Panc1 (cell line): ENCODE measurements at regions of chr5 and their contacts with region 1.

Region 1: GRCh38 chr5:136364307-136364706 is 1.0 kb downstream of the TRPC7 start:
- DNase-seq: no peak
- ATAC-seq: no peak; the same call in 1 of the 2 replicates
- H3K4me3 ChIP-seq: no peak overlapping the region
- H3K27ac ChIP-seq: no peak overlapping the region
- H3K4me1 ChIP-seq: no peaks in the 10 kb centered on the region
- H3K27me3 ChIP-seq: peaks cover 5% of the 10 kb centered on the region; the same call in 1 of the 2 replicates
- CTCF ChIP-seq: peak; percentile 56; the same call in 1 of the 2 replicates

Region 2: GRCh38 chr5:136296846-136297245 is 67.5 kb before region 1 on chr5:
- CTCF ChIA-PET with region 1: no interaction called
- POLR2A ChIA-PET with region 1: no interaction called
- in situ Hi-C with region 1: no loop called
- intact Hi-C with region 1: no loop called
- DNase-seq: no peak
- ATAC-seq: no peak
- H3K4me3 ChIP-seq: no peak overlapping the region
- H3K27ac ChIP-seq: no peak overlapping the region
- H3K4me1 ChIP-seq: no peaks in the 10 kb centered on the region
- H3K27me3 ChIP-seq: no peaks in the 10 kb centered on the region
- CTCF ChIP-seq: no peak

Region 3: GRCh38 chr5:136350343-136350742 is 14.0 kb before region 1 on chr5:
- CTCF ChIA-PET with region 1: no interaction called
- POLR2A ChIA-PET with region 1: no interaction called
- in situ Hi-C with region 1: no loop called
- intact Hi-C with region 1: loop called (anchors 1 kb)
- DNase-seq: no peak
- ATAC-seq: no peak
- H3K4me3 ChIP-seq: no peak overlapping the region
- H3K27ac ChIP-seq: no peak overlapping the region
- H3K4me1 ChIP-seq: no peaks in the 10 kb centered on the region
- H3K27me3 ChIP-seq: no peaks in the 10 kb centered on the region
- CTCF ChIP-seq: no peak

Region 4: DNA sequence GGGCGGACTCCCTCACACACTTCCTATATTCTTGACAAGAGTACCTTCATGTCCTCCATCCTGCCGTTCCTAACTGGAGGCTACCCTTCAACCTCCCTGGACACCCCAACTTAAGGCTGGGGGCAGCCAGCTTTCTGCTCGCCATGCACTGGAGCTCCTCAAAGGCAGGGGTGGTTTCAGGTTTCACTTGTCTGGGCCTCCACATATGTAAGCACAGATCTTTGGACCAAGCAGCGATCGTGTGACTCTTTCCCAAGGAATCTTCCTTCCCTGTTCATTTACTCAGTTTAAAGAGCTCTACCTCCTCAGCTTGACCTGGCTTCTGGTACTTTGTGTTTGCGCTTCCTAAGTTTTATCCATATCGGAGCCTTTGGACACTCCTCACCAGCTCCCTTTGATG is 35.2 kb after region 1 on chr5:
- CTCF ChIA-PET with region 1: no interaction called
- POLR2A ChIA-PET with region 1: no interaction called
- in situ Hi-C with region 1: no loop called
- intact Hi-C with region 1: no loop called
- DNase-seq: no peak
- ATAC-seq: no peak
- H3K4me3 ChIP-seq: no peak overlapping the region
- H3K27ac ChIP-seq: no peak overlapping the region
- H3K4me1 ChIP-seq: no peaks in the 10 kb centered on the region
- H3K27me3 ChIP-seq: peaks cover 2% of the 10 kb centered on the region; the same call in 1 of the 2 replicates
- CTCF ChIP-seq: no peak

Region 5: GRCh38 chr5:136522217-136522956 is 158.1 kb after region 1 on chr5:
- CTCF ChIA-PET with region 1: no interaction called
- POLR2A ChIA-PET with region 1: no interaction called
- in situ Hi-C with region 1: no loop called
- intact Hi-C with region 1: no loop called
- DNase-seq: no peak
- ATAC-seq: no peak
- H3K4me3 ChIP-seq: no peak overlapping the region
- H3K27ac ChIP-seq: no peak overlapping the region
- H3K4me1 ChIP-seq: no peaks in the 10 kb centered on the region; the same call in 1 of the 2 replicates
- H3K27me3 ChIP-seq: peaks cover 3% of the 10 kb centered on the region; the same call in 1 of the 2 replicates
- CTCF ChIP-seq: no peak

Region 6: GRCh38 chr5:137310051-137310730 is 945.9 kb after region 1 on chr5:
- CTCF ChIA-PET with region 1: no interaction called
- POLR2A ChIA-PET with region 1: no interaction called
- in situ Hi-C with region 1: no loop called
- intact Hi-C with region 1: no loop called
- DNase-seq: peak; percentile 86
- ATAC-seq: 0 out of 2 replicates have a peak, but pooled peaks have one; percentile 56
- H3K4me3 ChIP-seq: no peak overlapping the region
- H3K27ac ChIP-seq: no peak overlapping the region
- H3K4me1 ChIP-seq: no peaks in the 10 kb centered on the region
- H3K27me3 ChIP-seq: peaks cover 2% of the 10 kb centered on the region; the same call in 1 of the 2 replicates
- CTCF ChIP-seq: no peak